Right ventricle myocardium inferior (tissue), 1 donor: ENCODE measurements at regions of chr12 and their contacts with region 1.

Region 1: DNA sequence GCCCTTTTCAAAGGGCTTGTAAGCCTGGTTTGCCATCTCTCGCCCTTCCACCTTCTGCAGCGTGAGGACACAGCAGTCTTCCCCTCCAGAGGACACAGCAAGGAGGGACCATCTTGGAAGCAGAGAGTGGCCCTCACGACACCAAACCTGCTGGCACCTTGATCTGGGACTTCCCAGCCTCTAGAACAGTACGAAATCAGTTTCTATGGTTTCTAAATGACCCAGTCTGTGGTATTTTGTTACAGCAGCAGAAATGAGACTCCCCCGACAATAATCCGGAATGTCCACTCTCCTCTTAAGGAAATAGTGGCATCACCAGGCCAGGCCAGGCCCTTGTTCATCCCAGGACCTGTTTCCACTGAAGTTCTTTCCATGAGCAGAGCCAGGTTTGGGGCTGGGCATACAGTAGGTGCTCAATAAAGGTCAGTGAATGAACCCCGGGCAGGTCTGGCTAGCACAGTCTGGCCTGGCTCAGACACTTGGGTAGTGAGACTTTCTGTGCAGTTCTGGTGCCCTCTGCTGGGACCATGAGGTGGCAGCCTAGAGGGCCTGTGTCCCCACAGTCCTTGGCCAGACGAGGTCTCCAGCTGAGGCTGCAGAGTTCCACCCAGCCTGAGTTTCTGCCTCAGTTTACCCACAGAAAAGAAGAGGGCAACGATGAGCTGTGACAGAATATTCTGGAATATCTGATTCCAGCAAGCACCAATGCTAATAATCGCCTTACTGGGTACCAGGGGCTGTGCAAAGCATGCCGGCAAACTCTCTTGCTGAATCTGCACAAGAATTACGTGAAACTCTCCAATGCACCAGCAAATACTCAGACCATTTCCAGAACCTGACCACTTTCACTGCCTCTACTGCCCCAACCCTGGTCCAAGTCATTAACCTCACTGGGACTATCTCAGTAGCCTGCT is 14.0 kb downstream of the ABCB9 start:
- DNase-seq: peak; percentile 85
- ATAC-seq: peak; percentile 93

Region 2: GRCh38 chr12:122793685-122794106 is 158.5 kb before region 1 on chr12:
- intact Hi-C with region 1: loop called (anchors 1 kb)
- DNase-seq: no peak
- ATAC-seq: no peak

Region 3: DNA sequence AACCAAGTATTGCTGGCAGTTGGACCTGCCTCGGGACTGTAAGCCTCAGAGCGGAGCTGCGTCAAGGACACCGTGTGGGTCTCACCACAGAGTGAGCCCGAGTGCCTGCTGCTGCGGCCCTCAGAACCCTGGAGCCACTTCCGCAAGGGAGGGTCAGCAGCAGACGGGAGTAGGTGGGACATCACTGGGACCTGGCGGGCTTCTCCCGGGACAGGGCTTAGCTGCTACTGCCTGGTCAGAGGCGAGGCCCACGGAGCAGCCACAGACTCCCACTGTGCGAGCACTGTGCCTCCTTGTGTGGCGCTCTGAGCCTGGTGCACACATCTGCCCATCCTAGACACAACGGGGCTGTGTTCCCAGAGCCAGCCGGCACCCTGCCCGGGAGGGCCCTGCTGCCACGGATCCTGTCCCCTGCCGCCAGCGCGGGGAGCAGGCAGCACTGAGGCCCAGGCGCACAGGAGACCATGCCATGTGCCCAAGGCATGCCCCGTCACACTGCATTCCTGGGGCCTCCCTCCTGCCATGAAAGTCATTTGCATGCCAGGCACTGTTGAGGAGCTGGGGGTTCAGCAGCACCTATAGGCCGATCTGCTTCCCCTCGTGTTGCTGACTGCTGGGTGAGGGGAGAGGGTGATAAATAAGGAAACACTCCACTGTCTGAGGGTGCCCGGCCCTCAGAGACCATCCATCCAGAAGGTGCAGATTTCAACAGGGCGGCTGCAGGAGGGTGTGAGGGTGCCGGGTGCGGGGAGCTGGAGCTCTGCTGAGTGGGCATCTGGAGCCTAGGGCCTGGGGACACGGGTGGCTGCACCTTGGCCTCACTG is 107.0 kb before region 1 on chr12:
- intact Hi-C with region 1: no loop called
- DNase-seq: no peak
- ATAC-seq: no peak

Region 4: GRCh38 chr12:122860346-122861090 is 91.7 kb before region 1 on chr12:
- intact Hi-C with region 1: loop called (anchors 1 kb)
- DNase-seq: peak; percentile 90
- ATAC-seq: peak; percentile 63